Left cardiac atrium (tissue), 4 donors: ENCODE measurements at regions of chr2 and their contacts with region 1.

Region 1: DNA sequence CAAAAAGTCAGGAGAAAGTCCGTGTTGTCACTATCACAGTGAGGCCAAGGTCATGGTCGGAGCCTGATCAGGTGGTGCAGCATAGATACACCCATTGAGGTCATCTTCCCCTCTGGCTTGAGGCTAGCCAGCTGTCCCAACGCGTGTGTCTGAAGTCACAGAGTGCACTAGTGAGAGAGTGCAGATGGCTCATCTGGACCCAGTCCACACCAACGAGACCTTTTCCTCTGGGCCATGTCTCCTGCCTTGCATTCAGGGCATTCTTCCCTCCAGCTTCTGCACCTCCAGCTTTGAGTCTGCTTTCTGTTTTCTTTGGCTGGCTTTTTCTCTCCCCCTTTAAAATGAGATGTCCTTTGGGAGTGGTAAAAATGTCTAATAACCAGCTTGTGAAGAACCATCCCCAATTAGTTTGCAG is 146.9 kb downstream of the TDRD15 start:
- DNase-seq: peak; percentile 79
- ATAC-seq: peak; percentile 84 to 91

Region 2: DNA sequence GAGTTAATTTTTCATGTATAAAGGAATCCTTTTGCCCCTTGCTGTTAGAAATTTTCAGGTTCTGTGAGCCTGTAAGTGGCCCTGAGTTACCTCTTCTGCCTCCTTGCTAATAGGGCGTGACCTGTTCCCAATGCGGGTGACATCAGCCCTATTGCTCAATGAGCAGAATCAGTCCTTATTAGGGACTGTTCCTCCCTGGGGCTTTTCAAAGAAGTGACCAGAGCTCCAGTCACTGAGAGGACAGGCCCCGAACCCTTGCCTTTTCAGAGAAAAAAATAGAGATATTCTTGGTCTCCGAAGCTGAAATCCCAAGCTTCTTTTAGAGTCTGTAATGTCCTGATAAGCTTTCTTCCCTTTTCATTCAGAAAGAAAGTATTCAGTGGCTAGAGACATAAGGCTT is 218.7 kb before region 1 on chr2:
- intact Hi-C with region 1: no loop called
- DNase-seq: no peak
- ATAC-seq: peak in 1 of 2 donors; percentile 41

Region 3: GRCh38 chr2:21310493-21310892 is 39.8 kb after region 1 on chr2:
- intact Hi-C with region 1: loop called in 1 of 2 experiments (anchors 5 kb)
- DNase-seq: no peak
- ATAC-seq: no peak

Region 4: GRCh38 chr2:21535826-21536225 is 265.1 kb after region 1 on chr2:
- intact Hi-C with region 1: no loop called
- DNase-seq: no peak
- ATAC-seq: no peak

Region 5: GRCh38 chr2:21567395-21567794 is 296.7 kb after region 1 on chr2:
- intact Hi-C with region 1: no loop called
- DNase-seq: no peak
- ATAC-seq: no peak